SK-N-SH (cell line): ENCODE measurements at regions of chr7 and their contacts with region 1.

Region 1: DNA sequence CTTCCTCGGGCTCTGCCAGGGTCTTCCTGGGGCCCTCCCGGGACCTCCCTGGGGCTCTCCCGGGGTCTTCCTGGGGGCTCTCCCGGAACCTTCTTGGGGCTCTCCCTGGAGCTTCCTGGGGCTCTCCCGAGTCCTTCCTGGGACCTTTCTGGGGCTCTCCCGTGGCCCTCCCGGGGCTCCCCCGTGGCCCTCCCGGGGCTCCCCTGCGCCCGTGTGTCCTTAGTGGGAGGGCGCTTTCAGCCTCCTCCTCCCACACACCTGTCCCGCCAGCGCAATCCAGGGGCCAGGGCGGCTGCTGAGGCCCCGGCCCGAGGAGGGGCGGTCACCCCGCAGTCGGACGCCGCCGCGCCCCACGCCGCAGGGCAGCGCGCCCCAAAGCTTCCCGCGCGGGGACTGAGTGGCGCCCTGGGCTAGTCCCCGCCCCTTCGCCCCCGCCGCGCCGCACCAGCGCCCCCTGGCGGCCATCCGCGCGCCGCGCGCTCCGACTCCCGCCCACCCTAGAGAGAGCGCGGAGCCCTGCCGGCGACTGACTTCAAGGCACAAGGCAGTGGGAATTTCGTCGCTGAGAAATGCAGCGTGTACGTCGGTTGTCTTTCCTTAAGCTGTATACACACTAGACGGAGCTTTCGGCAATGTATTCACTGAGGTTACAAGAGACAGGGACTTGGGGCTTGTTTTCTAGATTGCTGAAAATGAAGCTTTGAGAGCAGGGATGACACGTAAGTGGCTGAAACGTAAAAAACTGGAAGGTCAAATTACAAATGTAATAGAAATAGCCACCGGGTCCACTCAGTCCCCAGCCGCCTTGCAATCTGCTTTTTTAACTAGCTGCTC is 47.1 kb downstream of the INSIG1 start:
- DNase-seq: peak; percentile 99
- H3K4me3 ChIP-seq: peak overlapping the region; percentile 49 to 51; a peak in 3 of 4 replicates
- H3K27ac ChIP-seq: no peak overlapping the region
- H3K4me1 ChIP-seq: peaks cover 0 to 3% of the 10 kb centered on the region in 2 experiments; a peak in 1 of 4 replicates
- H3K27me3 ChIP-seq: peaks cover 25% of the 10 kb centered on the region
- CTCF ChIP-seq: peak; percentile 93
- EP300 ChIP-seq: no peak
- RAD21 ChIP-seq: peak; percentile 83

Region 2: GRCh38 chr7:154832557-154833138 is 512.2 kb before region 1 on chr7:
- CTCF ChIA-PET with region 1: interaction called, 17 read pairs
- POLR2A ChIA-PET with region 1: no interaction called
- DNase-seq: peak; percentile 81
- H3K4me3 ChIP-seq: no peak overlapping the region
- H3K27ac ChIP-seq: no peak overlapping the region
- H3K4me1 ChIP-seq: no peaks in the 10 kb centered on the region
- H3K27me3 ChIP-seq: no peaks in the 10 kb centered on the region
- CTCF ChIP-seq: no peak
- EP300 ChIP-seq: no peak
- RAD21 ChIP-seq: peak; percentile 95

Region 3: DNA sequence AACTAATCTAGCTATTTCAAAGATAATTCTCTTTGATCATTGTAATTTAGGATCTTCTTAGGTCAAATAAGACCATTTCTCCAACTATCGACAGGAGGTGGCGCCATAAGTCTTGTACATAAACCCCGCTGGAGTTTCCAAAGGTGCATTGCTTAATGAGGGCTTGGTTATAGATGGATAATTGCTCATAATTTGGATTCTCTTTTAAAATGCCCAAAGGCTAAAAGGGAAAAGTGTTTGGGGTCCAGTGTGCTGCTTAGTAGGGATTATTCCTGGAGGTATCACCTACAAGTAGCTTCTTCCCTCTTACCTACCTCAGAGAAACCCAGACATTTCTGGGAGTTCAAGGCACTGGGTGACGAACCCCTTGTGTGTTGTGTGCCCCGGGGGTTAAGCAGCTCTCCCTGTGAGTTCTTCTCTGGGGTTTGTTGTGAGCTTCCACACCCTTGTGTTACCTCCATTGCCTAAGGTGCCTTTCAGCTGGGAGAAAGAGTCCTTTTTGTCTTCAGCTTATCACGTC is 417.1 kb before region 1 on chr7:
- CTCF ChIA-PET with region 1: interaction called, 55 read pairs
- POLR2A ChIA-PET with region 1: no interaction called
- DNase-seq: peak; percentile 68
- H3K4me3 ChIP-seq: peak overlapping the region; percentile 61 to 70
- H3K27ac ChIP-seq: peak overlapping the region in 1 of 2 experiments; percentile 44; a peak in 1 of 4 replicates
- H3K4me1 ChIP-seq: peaks cover 0 to 5% of the 10 kb centered on the region in 2 experiments; a peak in 1 of 4 replicates
- H3K27me3 ChIP-seq: no peaks in the 10 kb centered on the region
- CTCF ChIP-seq: peak; percentile 97
- EP300 ChIP-seq: no peak
- RAD21 ChIP-seq: peak; percentile 96

Region 4: DNA sequence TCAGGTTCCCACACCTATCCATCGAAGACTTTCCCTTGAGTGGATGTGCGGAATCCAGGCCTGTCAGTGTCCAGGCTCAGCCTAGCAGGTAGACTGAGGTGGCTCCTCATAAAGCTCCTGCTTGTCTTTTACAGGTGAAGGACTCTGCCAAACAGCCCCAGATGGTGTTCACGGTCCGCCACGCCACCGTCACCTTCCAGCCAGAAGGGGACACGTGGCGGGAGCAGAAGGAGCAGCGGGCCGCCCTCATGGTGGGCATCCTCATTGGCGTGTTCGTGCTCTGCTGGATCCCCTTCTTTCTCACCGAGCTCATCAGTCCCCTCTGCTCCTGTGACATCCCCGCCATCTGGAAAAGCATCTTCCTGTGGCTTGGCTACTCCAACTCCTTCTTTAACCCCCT is 260.8 kb before region 1 on chr7:
- CTCF ChIA-PET with region 1: no interaction called
- POLR2A ChIA-PET with region 1: no interaction called
- DNase-seq: no peak
- H3K4me3 ChIP-seq: no peak overlapping the region
- H3K27ac ChIP-seq: no peak overlapping the region
- H3K4me1 ChIP-seq: no peaks in the 10 kb centered on the region
- H3K27me3 ChIP-seq: peaks cover 8% of the 10 kb centered on the region; the same call in 1 of the 2 replicates
- CTCF ChIP-seq: no peak
- EP300 ChIP-seq: no peak
- RAD21 ChIP-seq: no peak

Region 5: DNA sequence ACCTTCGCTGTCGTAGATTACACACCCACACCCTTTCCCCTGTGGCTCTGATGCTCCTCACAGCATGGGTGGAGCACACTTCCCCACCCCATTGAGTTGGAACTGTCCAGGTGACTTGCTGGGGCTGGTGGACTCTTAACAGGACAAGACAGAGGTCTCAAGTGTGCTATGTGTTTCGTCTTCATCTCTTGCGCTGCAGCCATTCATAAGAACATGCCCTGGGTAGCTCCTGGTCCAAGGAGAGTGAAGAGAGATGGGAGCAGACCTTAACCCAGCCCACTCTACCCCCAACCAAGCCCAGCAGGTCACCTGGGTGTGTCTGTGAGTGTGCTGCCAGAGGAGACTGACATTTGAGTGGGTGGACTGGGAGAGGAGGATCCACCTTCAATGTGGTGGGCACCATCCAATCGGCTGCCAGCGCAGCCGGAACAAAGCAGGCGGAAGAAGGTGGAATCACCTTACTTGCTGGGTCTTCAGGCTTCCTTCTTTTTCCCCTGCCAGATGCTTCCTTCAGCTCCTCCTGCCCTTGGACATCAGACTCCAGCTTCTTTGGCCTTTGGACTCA is 162.3 kb before region 1 on chr7:
- CTCF ChIA-PET with region 1: interaction called, 176 read pairs
- POLR2A ChIA-PET with region 1: no interaction called
- DNase-seq: no peak
- H3K4me3 ChIP-seq: no peak overlapping the region
- H3K27ac ChIP-seq: no peak overlapping the region
- H3K4me1 ChIP-seq: no peaks in the 10 kb centered on the region
- H3K27me3 ChIP-seq: no peaks in the 10 kb centered on the region
- CTCF ChIP-seq: no peak
- EP300 ChIP-seq: no peak
- RAD21 ChIP-seq: no peak

Region 6: DNA sequence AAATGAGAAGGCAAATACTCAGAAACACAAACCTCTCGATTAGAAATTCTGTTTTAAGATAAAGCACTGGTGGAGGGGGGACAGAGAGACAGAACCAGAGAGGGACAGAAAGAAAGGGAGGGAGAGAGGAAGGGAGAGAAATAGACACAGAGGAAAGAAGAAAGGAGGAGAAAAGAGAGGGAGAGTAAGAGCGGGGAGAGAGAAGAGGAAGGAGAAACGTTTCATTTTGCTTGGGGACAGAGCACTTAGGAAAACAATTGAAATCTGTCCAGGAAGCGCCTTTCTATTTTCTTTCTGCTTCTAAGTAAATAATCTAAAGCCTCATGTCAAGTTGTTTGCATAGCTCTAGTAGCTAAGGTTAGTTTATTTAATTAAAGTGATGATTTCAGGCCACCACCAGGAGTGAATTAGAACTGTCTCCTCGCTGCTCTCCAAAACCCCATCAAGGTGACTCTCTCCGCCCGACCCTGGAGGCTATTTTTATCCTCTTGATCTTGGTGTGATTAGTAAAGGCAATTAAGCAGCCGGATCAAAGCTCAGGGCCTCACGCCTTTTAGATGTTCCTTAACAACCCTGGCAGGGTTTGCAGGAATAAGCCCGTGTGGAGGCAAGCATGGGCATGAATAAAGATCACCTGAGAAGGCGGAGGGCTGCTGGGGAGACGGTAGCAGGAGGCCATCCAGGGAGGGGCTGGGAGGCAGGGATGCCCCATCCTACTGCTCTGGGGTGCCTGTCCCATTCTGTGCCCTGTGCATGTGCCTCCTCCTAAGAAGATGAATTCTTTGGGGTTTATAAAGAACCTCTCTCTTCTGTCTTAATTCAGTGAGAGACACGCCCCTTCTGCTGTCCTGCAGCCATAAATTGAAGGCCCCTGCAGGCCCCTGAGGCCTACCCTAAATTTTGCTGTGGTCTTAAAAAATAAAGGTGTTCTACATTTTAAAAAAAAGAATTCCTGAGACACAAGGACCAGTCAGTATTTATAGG is 120.4 kb before region 1 on chr7:
- CTCF ChIA-PET with region 1: interaction called, 31 read pairs
- POLR2A ChIA-PET with region 1: no interaction called
- DNase-seq: no peak
- H3K4me3 ChIP-seq: no peak overlapping the region
- H3K27ac ChIP-seq: no peak overlapping the region
- H3K4me1 ChIP-seq: peaks cover 0 to 28% of the 10 kb centered on the region in 2 experiments; a peak in 1 of 4 replicates
- H3K27me3 ChIP-seq: no peaks in the 10 kb centered on the region
- CTCF ChIP-seq: no peak
- EP300 ChIP-seq: no peak
- RAD21 ChIP-seq: no peak

Region 7: DNA sequence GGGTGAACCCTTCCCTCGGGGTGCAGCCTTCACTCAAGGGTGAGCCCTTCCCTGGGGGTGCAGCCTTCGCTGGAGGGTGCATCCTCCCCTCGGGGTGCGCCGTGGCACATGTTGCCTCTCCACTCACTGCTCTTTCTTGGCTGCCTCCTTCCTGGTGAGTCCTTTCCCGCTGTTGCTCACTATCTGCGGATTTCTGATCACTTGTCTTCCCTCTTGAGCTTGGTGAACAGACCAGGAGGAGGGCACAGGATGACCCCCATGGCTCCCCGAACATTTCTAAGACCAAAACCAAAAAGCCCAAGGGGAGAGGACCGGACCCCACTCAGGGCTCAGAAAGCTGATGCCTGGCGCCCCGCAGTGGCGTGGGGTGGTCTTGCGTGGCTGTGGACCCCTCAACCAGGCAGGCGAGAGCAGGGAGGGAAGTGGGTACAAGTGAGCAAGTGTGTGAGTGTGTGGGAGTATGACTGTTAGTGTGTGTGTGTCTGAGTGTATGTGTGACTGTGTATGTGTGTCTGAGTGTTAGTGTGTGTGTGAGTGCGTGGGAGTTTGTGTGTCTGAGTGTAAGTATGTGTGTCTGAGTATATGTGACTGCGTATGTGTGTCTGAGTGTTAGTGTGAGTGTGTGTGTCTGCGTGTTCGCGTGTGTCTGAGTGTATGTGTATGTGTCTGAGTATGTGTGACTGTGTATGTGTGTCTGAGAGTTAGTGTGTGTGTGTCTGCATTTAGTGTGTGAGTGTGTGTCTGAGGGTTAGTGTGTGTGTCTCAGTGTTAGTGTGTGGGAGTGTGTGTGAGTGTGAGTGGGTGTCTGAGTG is 81.3 kb before region 1 on chr7:
- CTCF ChIA-PET with region 1: interaction called, 11 read pairs
- POLR2A ChIA-PET with region 1: no interaction called
- DNase-seq: peak; percentile 65
- H3K4me3 ChIP-seq: no peak overlapping the region
- H3K27ac ChIP-seq: no peak overlapping the region
- H3K4me1 ChIP-seq: peaks cover 0 to 13% of the 10 kb centered on the region in 2 experiments; a peak in 2 of 4 replicates
- H3K27me3 ChIP-seq: peaks cover 5% of the 10 kb centered on the region
- CTCF ChIP-seq: peak; percentile 33
- EP300 ChIP-seq: no peak
- RAD21 ChIP-seq: peak; percentile 62

Region 8: GRCh38 chr7:155333346-155334234 is 11.2 kb before region 1 on chr7:
- CTCF ChIA-PET with region 1: interaction called, 40 read pairs
- POLR2A ChIA-PET with region 1: no interaction called
- DNase-seq: no peak
- H3K4me3 ChIP-seq: no peak overlapping the region
- H3K27ac ChIP-seq: no peak overlapping the region
- H3K4me1 ChIP-seq: no peaks in the 10 kb centered on the region; a peak in 1 of 4 replicates
- H3K27me3 ChIP-seq: no peaks in the 10 kb centered on the region; the same call in 1 of the 2 replicates
- CTCF ChIP-seq: no peak
- EP300 ChIP-seq: no peak
- RAD21 ChIP-seq: no peak

Region 9: DNA sequence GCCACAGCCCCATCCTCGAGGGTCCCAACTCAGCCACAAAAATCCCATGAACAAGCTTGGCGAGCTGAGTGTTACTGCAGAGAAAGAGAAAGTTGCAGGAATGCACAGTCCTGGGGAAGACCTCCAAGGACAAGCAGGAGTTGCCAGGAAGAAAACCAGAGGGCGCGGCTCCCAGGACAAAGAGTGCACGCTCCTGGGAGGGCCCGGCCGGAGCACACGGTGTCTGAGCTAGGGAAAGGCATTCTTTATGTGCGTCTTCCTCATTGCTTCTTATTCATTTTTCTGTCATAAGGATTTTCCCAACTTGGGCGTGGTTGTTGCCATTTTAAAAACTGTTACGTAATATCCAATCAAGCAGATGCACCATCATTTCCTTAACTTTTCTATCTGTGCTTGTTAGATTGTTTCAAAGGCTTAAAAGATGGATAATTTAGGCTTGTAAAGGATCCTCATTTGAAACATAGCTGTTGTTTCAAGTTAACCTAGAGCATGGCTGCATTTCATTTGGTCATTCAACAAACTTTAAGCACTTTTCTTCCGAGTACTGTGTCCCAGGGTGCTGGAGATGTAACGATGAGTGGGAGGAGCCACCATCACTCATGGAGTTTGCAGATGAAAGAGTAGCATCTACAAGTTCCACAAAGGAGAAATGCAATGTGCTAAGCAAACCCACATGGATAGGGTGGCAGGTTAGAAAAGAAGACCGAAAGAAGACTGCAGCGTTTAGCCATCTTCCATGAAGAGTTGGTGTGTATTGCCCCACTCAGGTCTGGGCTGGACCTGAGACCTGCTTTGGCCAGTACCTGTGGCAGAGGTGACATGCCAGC is 207.2 kb after region 1 on chr7:
- CTCF ChIA-PET with region 1: no interaction called
- POLR2A ChIA-PET with region 1: no interaction called
- DNase-seq: no peak
- H3K4me3 ChIP-seq: no peak overlapping the region
- H3K27ac ChIP-seq: no peak overlapping the region
- H3K4me1 ChIP-seq: no peaks in the 10 kb centered on the region
- H3K27me3 ChIP-seq: peaks cover 45% of the 10 kb centered on the region
- CTCF ChIP-seq: no peak
- EP300 ChIP-seq: no peak
- RAD21 ChIP-seq: no peak

Region 10: GRCh38 chr7:156019776-156020565 is 675.2 kb after region 1 on chr7:
- CTCF ChIA-PET with region 1: no interaction called
- POLR2A ChIA-PET with region 1: no interaction called
- DNase-seq: no peak
- H3K4me3 ChIP-seq: no peak overlapping the region
- H3K27ac ChIP-seq: no peak overlapping the region
- H3K4me1 ChIP-seq: no peaks in the 10 kb centered on the region
- H3K27me3 ChIP-seq: peaks cover 81% of the 10 kb centered on the region
- CTCF ChIP-seq: no peak
- EP300 ChIP-seq: no peak
- RAD21 ChIP-seq: no peak